T-cell (primary cell): ENCODE measurements at regions of chr11 and their contacts with region 1.

Region 1: DNA sequence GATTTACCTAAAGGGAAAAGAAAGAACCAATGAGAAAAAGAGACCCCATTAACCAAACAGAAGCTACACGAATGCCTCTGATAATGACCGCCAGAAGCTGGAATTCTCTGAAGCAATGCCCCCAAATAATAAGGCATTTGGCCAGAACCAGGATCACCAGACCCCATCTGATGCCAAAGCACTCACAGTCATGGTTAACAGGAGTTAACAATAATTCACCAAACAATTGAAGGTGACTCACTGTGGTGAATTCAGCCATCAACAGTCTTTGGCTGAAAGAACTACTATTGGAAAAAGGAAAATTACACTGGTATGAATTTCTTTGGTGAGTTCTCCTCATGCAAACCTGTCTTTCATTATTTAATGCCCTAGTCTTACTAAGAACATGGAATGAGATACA is 21.9 kb upstream of the NFRKB start:
- DNase-seq: no peak
- ATAC-seq: no peak
- H3K4me3 ChIP-seq: no peak overlapping the region
- H3K4me3 Mint-ChIP-seq: no peak overlapping the region
- H3K27ac ChIP-seq: no peak overlapping the region
- H3K27ac Mint-ChIP-seq: no peak overlapping the region
- H3K4me1 ChIP-seq: no peaks in the 10 kb centered on the region
- H3K4me1 Mint-ChIP-seq: peaks cover 0 to 3% (median 0%) of the 10 kb centered on the region in 3 donors
- H3K27me3 ChIP-seq: no peaks in the 10 kb centered on the region
- H3K27me3 Mint-ChIP-seq: no peaks in the 10 kb centered on the region

Region 2: DNA sequence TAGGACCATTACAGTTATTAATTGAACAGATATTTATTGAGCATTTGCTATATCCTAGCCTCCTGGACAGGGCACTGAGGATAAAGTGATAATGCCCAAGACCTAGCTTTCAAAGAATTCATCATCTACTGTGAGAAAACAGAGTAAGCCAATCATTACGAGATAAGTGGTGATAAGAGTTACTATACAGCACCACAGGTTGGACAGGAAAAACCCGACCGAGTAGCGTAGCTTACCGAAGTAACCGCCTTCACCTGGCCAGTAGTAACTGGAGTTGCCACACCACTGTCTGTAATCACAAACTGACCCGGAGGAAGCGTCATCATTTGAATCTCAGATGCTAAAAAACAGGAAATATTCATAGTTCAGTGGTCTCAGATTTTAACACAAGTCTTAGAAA is 11.8 kb before region 1 on chr11:
- CTCF ChIA-PET with region 1: no interaction called
- POLR2A ChIA-PET with region 1: no interaction called
- DNase-seq: no peak
- ATAC-seq: no peak
- H3K4me3 ChIP-seq: no peak overlapping the region
- H3K4me3 Mint-ChIP-seq: no peak overlapping the region
- H3K27ac ChIP-seq: no peak overlapping the region
- H3K27ac Mint-ChIP-seq: no peak overlapping the region
- H3K4me1 ChIP-seq: no peaks in the 10 kb centered on the region
- H3K4me1 Mint-ChIP-seq: no peaks in the 10 kb centered on the region
- H3K27me3 ChIP-seq: no peaks in the 10 kb centered on the region
- H3K27me3 Mint-ChIP-seq: no peaks in the 10 kb centered on the region

Region 3: GRCh38 chr11:129979046-129979605 is 61.9 kb after region 1 on chr11:
- CTCF ChIA-PET with region 1: interaction called in 1 of 2 experiments, 12 read pairs
- POLR2A ChIA-PET with region 1: no interaction called
- DNase-seq: no peak
- ATAC-seq: no peak
- H3K4me3 ChIP-seq: no peak overlapping the region
- H3K4me3 Mint-ChIP-seq: no peak overlapping the region
- H3K27ac ChIP-seq: no peak overlapping the region
- H3K27ac Mint-ChIP-seq: no peak overlapping the region
- H3K4me1 ChIP-seq: no peaks in the 10 kb centered on the region
- H3K4me1 Mint-ChIP-seq: peaks cover 0 to 17% (median 0%) of the 10 kb centered on the region in 3 donors
- H3K27me3 ChIP-seq: no peaks in the 10 kb centered on the region
- H3K27me3 Mint-ChIP-seq: no peaks in the 10 kb centered on the region

Region 4: DNA sequence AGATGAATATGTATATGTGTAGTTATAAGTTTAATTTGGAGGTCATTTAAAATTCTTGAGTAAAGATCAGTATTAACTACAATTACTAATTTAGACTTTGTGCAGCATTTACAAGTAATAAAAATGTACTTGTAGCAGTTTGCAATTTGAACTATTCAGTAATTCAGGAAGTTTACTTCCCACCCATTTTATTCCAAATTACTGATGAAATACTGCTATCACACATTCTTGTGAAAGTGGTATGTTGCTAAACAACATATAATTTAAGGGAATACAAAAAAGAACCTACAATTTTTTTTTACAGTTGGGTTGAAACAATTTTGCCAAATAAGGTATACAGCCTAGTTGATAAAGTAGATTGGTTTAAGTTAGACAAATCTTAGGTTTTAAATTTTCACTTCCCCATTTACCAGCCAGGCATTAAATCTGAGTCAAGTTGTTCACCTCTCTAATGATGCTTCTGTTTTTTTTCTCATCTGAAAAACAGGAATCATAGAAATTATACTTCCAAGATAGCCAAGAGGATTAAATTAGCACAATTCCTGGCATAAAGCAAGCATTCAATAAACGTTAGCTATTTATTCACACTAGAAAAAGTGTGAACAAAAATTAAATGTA is 352.2 kb after region 1 on chr11:
- CTCF ChIA-PET with region 1: no interaction called
- POLR2A ChIA-PET with region 1: no interaction called
- DNase-seq: no peak
- ATAC-seq: no peak
- H3K4me3 ChIP-seq: no peak overlapping the region
- H3K4me3 Mint-ChIP-seq: no peak overlapping the region
- H3K27ac ChIP-seq: no peak overlapping the region
- H3K27ac Mint-ChIP-seq: no peak overlapping the region
- H3K4me1 ChIP-seq: no peaks in the 10 kb centered on the region
- H3K4me1 Mint-ChIP-seq: peaks cover 19 to 30% (median 26%) of the 10 kb centered on the region in 3 donors
- H3K27me3 ChIP-seq: no peaks in the 10 kb centered on the region
- H3K27me3 Mint-ChIP-seq: no peaks in the 10 kb centered on the region